ENCODE measurements at regions of chr3 and their contacts with region 1.

Region 1: GRCh38 chr3:129052675-129053074 is 7.9 kb upstream of the GP9 start:
- DNase-seq: no peak
- ATAC-seq: no peak
- H3K4me3 Mint-ChIP-seq: no peak overlapping the region
- H3K27ac Mint-ChIP-seq: no peak overlapping the region
- H3K4me1 Mint-ChIP-seq: peaks cover 10% of the 10 kb centered on the region
- H3K27me3 Mint-ChIP-seq: no peaks in the 10 kb centered on the region

Region 2: GRCh38 chr3:129016356-129016719 is 36.3 kb before region 1 on chr3:
- CTCF ChIA-PET with region 1: interaction called, 18 read pairs
- POLR2A ChIA-PET with region 1: no interaction called
- intact Hi-C with region 1: no loop called
- DNase-seq: peak; percentile 80
- ATAC-seq: peak; percentile 84
- H3K4me3 Mint-ChIP-seq: peak overlapping the region; percentile 63
- H3K27ac Mint-ChIP-seq: peak overlapping the region; percentile 96
- H3K4me1 Mint-ChIP-seq: peaks cover 36% of the 10 kb centered on the region
- H3K27me3 Mint-ChIP-seq: no peaks in the 10 kb centered on the region

Region 3: DNA sequence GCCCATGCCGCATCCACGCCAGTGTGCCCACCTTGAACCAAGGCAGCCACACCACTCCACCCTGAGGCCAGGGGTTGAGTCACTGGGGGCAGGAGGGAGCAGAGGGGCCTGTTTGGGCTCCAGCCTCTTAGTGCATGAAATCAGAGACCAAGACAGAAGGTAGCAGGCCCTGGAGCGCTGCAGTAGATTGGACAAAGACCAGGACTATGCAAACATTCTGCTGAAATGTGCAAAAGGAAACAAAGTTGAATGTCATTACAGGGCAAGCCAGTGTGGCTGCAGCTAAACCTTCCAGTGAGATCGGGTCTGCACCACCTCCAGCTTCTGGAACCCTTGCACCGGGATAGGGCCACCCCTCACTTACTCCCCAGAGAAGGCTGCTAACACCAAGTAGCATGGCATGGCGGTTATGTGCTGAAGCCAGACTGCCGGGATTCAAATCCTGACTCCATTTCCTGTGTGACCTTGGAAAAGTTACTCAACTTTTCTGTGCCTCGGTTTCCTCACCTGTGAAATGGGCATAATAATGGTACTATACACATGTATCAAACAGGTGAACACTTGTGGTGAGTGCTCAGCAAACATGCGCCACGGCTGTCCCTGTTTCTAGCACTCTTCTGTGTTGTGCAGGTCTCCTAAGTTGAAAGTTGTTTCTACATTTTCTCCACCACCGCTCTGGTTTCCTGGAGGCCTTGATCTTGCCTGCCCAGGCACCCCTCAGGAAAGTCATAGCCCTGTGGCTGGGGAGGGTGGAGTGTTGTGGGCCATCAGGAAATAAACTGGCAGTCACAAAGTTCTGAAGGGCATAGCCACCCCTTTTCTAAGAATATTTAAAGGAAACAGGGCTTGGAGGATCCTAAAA is 17.1 kb before region 1 on chr3:
- CTCF ChIA-PET with region 1: interaction called, 13 read pairs
- POLR2A ChIA-PET with region 1: no interaction called
- intact Hi-C with region 1: no loop called
- DNase-seq: no peak
- ATAC-seq: no peak
- H3K4me3 Mint-ChIP-seq: no peak overlapping the region
- H3K27ac Mint-ChIP-seq: no peak overlapping the region
- H3K4me1 Mint-ChIP-seq: peaks cover 14% of the 10 kb centered on the region
- H3K27me3 Mint-ChIP-seq: peaks cover 3% of the 10 kb centered on the region

Region 4: GRCh38 chr3:129068291-129068886 is 15.7 kb after region 1 on chr3:
- CTCF ChIA-PET with region 1: interaction called, 63 read pairs
- POLR2A ChIA-PET with region 1: interaction called, 4 read pairs
- intact Hi-C with region 1: loop called in 1 of 2 experiments (anchors 1 kb)
- DNase-seq: peak; percentile 31
- ATAC-seq: peak; percentile 47
- H3K4me3 Mint-ChIP-seq: peak overlapping the region; percentile 38
- H3K27ac Mint-ChIP-seq: no peak overlapping the region
- H3K4me1 Mint-ChIP-seq: peaks cover 9% of the 10 kb centered on the region
- H3K27me3 Mint-ChIP-seq: peaks cover 2% of the 10 kb centered on the region

Region 5: GRCh38 chr3:129160891-129161859 is 108.5 kb after region 1 on chr3 and contains the start of gene ISY1:
- CTCF ChIA-PET with region 1: interaction called, 3 read pairs
- POLR2A ChIA-PET with region 1: interaction called, 5 read pairs
- intact Hi-C with region 1: loop called (anchors 1 kb)
- DNase-seq: peak; percentile 93
- ATAC-seq: peak; percentile 81
- H3K4me3 Mint-ChIP-seq: peak within 1 kb of the TSS; percentile 93
- H3K27ac Mint-ChIP-seq: peak within 1 kb of the TSS; percentile 98
- H3K4me1 Mint-ChIP-seq: peaks cover 30% of the 10 kb centered on the region
- H3K27me3 Mint-ChIP-seq: no peaks in the 10 kb centered on the region
- total RNA-seq, gene ISY1: 44.9 to 65.5 TPM

Measured in activated CD4-positive, alpha-beta T cell treated with anti-CD3 and anti-CD28 coated beads for 36 hours (primary cell).